K562 (cell line): ENCODE measurements at regions of chr12 and their contacts with region 1.

Region 1: GRCh38 chr12:122635471-122635870 is 67.7 kb downstream of the HCAR2 start:
- DNase-seq: no peak
- ATAC-seq: no peak
- H3K4me3 ChIP-seq: no peak overlapping the region
- H3K27ac ChIP-seq: no peak overlapping the region
- H3K4me1 ChIP-seq: no peaks in the 10 kb centered on the region
- H3K27me3 ChIP-seq: no peaks in the 10 kb centered on the region
- CTCF ChIP-seq: no peak
- EP300 ChIP-seq: no peak
- POLR2A ChIP-seq: no peak
- RAD21 ChIP-seq: no peak

Region 2: GRCh38 chr12:122064025-122064777 is 571.3 kb before region 1 on chr12:
- CTCF ChIA-PET with region 1: no interaction called
- POLR2A ChIA-PET with region 1: no interaction called
- in situ Hi-C with region 1: no loop called
- intact Hi-C with region 1: no loop called
- DNase-seq: peak; percentile 96 to 99 (median 98)
- ATAC-seq: peak; percentile 97
- H3K4me3 ChIP-seq: peak overlapping the region; percentile 44
- H3K27ac ChIP-seq: peak overlapping the region; percentile 94
- H3K4me1 ChIP-seq: peaks cover 45 to 54% of the 10 kb centered on the region in 2 experiments
- H3K27me3 ChIP-seq: no peaks in the 10 kb centered on the region
- CTCF ChIP-seq: peak; percentile 71 to 88 (median 82)
- EP300 ChIP-seq: peak; percentile 50
- POLR2A ChIP-seq: peak; percentile 81
- RAD21 ChIP-seq: peak; percentile 44 to 62

Region 3: GRCh38 chr12:122486805-122487426 is 148.6 kb before region 1 on chr12:
- CTCF ChIA-PET with region 1: no interaction called
- POLR2A ChIA-PET with region 1: no interaction called
- in situ Hi-C with region 1: no loop called
- intact Hi-C with region 1: no loop called
- DNase-seq: no peak
- ATAC-seq: no peak
- H3K4me3 ChIP-seq: no peak overlapping the region
- H3K27ac ChIP-seq: no peak overlapping the region
- H3K4me1 ChIP-seq: peaks cover 0 to 6% of the 10 kb centered on the region in 2 experiments; a peak in 2 of 5 replicates
- H3K27me3 ChIP-seq: no peaks in the 10 kb centered on the region
- CTCF ChIP-seq: no peak
- EP300 ChIP-seq: no peak
- POLR2A ChIP-seq: no peak
- RAD21 ChIP-seq: no peak

Region 4: GRCh38 chr12:122860346-122861090 is 225.0 kb after region 1 on chr12:
- CTCF ChIA-PET with region 1: no interaction called
- POLR2A ChIA-PET with region 1: no interaction called
- in situ Hi-C with region 1: no loop called
- intact Hi-C with region 1: loop called (anchors 5 kb)
- DNase-seq: peak; percentile 73 to 87 (median 80)
- ATAC-seq: peak; percentile 91
- H3K4me3 ChIP-seq: no peak overlapping the region
- H3K27ac ChIP-seq: no peak overlapping the region
- H3K4me1 ChIP-seq: peaks cover 0 to 54% of the 10 kb centered on the region in 2 experiments; a peak in 2 of 5 replicates
- H3K27me3 ChIP-seq: no peaks in the 10 kb centered on the region
- CTCF ChIP-seq: peak; percentile 86 to 90 (median 90)
- EP300 ChIP-seq: no peak
- POLR2A ChIP-seq: no peak
- RAD21 ChIP-seq: peak; percentile 85 to 95